Psoas muscle (tissue), 8 donors: ENCODE measurements at regions of chr12 and their contacts with region 1.

Region 1: DNA sequence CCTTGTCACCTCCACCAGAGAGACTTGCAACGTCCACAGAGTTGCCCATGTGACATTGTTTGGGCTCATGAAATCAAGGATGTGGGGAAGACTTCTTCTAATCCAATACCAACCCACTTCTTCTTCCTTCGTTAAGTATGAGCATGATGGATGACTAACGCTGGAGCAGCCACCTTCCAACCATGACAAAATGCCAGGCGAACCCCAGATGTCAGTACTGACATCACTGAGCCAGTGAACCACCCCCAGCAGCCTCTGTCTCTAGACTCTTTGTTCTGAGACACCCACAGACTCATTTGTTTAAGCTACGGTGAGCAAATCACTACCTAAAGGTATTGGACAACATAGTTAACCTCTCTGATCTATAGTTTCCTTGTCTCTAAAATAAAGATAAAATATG is 123.7 kb downstream of the GRIN2B start:
- DNase-seq: no peak
- ATAC-seq: no peak
- H3K4me3 ChIP-seq: no peak overlapping the region
- H3K27ac ChIP-seq: no peak overlapping the region
- H3K4me1 ChIP-seq: no peaks in the 10 kb centered on the region
- H3K27me3 ChIP-seq: no peaks in the 10 kb centered on the region
- CTCF ChIP-seq: no peak

Region 2: GRCh38 chr12:13905809-13906208 is 48.1 kb after region 1 on chr12:
- intact Hi-C with region 1: loop called in 1 of 2 experiments (anchors 2 kb)
- DNase-seq: no peak
- ATAC-seq: no peak
- H3K4me3 ChIP-seq: no peak overlapping the region
- H3K27ac ChIP-seq: no peak overlapping the region
- H3K4me1 ChIP-seq: no peaks in the 10 kb centered on the region
- H3K27me3 ChIP-seq: peaks cover 0 to 4% (median 0%) of the 10 kb centered on the region in 3 donors
- CTCF ChIP-seq: no peak

Region 3: GRCh38 chr12:14290951-14291350 is 433.2 kb after region 1 on chr12:
- intact Hi-C with region 1: no loop called
- DNase-seq: no peak
- ATAC-seq: no peak
- H3K4me3 ChIP-seq: no peak overlapping the region
- H3K27ac ChIP-seq: no peak overlapping the region
- H3K4me1 ChIP-seq: no peaks in the 10 kb centered on the region
- H3K27me3 ChIP-seq: no peaks in the 10 kb centered on the region
- CTCF ChIP-seq: no peak